ENCODE measurements at regions of chr2 and their contacts with region 1.

Region 1: GRCh38 chr2:183078465-183079138 is at the start of gene DUSP19:
- DNase-seq: peak; percentile 60 to 97
- H3K4me3 ChIP-seq: peak within 1 kb of the TSS; percentile 76 to 77
- H3K27ac ChIP-seq: peak within 1 kb of the TSS; percentile 89 to 91
- H3K4me1 ChIP-seq: peaks cover 0 to 18% of the 10 kb centered on the region in 2 donors
- H3K27me3 ChIP-seq: no peaks in the 10 kb centered on the region
- CTCF ChIP-seq: no peak
- total RNA-seq, gene DUSP19: 1.3 TPM

Region 2: DNA sequence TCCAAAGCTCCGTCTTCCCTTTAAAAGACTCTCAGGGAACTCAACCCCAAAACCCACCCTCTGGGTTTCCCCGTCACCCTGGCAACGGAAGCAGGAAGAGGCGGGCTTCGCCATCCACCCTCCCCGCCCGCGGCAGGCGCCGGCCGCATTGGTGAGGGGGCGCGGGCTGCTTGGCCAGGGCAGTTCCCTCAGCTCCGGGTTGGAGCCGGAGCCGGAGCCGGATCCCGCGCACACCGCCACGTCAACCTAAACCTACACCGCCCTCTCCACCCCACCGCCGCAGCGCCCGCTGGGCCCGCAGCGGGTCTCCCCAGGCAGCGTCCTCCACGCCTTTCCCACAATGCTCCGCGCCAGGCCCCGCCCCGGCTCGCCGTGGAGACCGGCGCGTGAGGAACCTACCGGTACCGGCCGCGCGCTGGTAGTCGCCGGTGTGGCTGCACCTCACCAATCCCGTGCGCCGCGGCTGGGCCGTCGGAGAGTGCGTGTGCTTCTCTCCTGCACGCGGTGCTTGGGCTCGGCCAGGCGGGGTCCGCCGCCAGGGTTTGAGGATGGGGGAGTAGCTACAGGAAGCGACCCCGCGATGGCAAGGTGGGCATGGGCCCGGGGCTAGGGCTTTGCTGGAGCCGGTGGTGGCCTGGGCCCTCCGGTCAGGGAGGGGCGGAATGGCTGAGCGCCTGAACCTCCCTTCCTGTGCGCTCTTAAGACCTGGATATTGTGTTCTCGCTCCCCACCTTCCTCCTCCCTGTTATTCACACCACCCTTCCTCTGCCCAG is 362.5 kb before region 1 on chr2 and contains the start of gene DNAJC10:
- intact Hi-C with region 1: loop called (anchors 5 kb)
- DNase-seq: peak; percentile 70 to 94
- H3K4me3 ChIP-seq: peak within 1 kb of the TSS; percentile 82 to 91
- H3K27ac ChIP-seq: peak within 1 kb of the TSS; percentile 86 to 90
- H3K4me1 ChIP-seq: peaks cover 0 to 4% of the 10 kb centered on the region in 2 donors
- H3K27me3 ChIP-seq: no peaks in the 10 kb centered on the region
- CTCF ChIP-seq: no peak
- total RNA-seq, gene DNAJC10: 26.0 TPM

Region 3: DNA sequence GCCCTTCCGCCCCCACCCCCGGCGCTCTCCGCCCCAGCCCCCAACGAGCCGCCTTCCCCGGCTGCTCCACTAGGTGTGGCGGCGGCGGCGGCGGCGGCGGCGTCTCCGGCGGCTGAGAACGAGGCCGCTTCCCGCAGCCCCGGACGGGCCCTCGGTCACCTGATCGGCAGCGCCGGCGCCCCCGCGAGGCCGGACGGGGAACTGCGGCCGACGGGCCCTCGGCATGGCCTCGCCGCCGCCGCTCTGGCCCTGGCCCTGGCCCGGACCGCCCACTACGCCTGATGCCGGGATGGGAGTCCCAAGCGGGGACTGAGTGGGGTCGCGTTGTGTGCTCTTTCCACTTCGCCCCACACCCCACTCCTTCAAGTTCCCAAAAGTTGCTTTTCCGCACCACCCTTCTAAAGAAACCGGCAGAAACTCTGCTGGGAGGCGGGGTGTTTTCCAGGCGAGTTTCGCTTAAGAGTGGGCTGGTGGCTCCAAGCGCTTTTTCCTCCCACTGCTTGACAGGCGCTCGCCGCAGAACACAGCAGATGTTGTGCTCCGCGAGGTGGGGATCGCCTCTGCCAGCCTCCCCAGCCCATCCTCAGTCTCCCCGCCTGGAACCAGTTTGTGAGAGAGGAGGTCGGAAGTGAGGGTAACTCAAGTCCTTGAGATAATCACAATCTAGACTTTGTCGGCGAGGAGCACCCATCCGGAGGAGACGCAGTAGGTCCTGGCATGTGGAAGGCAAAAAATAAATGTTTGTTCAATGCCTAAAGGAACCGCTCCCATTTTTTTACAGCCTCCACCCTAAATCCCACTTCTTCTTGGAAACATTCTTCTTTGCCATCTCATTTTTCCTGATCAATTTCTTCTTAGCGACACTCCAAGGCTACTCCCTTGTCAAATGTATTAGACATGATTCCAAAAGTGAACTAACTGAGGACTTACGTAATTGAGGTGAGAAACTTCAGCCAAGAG is 40.0 kb before region 1 on chr2 and contains the start of gene NCKAP1:
- intact Hi-C with region 1: loop called (anchors 1 kb)
- DNase-seq: peak; percentile 54 to 95
- H3K4me3 ChIP-seq: peak within 1 kb of the TSS; percentile 87 to 95
- H3K27ac ChIP-seq: peak within 1 kb of the TSS; percentile 99 to 100
- H3K4me1 ChIP-seq: peaks cover 0 to 22% of the 10 kb centered on the region in 2 donors
- H3K27me3 ChIP-seq: no peaks in the 10 kb centered on the region
- CTCF ChIP-seq: peak; percentile 45 to 97 (median 75)
- total RNA-seq, gene NCKAP1: 55.7 TPM

Region 4: DNA sequence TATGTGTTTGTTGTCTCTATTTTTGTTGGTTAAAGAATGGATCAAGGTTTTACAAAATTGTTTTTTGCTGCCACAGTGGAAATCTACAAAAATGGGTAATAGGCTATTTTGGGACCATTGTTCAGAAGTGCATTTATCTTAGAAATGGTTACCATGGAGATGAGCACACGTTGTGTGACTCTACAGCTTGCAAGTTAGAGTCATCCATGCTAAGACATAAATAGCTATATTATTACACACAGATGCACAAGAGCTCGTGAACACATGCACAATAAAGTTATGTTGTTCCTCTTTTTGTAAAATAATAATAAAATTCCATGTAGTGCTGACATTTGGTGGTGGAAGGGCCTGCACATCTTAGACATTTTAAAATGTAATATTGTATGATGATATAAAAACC is 15.5 kb before region 1 on chr2:
- intact Hi-C with region 1: loop called (anchors 2 kb)
- DNase-seq: no peak
- H3K4me3 ChIP-seq: no peak overlapping the region
- H3K27ac ChIP-seq: no peak overlapping the region
- H3K4me1 ChIP-seq: no peaks in the 10 kb centered on the region
- H3K27me3 ChIP-seq: no peaks in the 10 kb centered on the region
- CTCF ChIP-seq: no peak

Region 5: DNA sequence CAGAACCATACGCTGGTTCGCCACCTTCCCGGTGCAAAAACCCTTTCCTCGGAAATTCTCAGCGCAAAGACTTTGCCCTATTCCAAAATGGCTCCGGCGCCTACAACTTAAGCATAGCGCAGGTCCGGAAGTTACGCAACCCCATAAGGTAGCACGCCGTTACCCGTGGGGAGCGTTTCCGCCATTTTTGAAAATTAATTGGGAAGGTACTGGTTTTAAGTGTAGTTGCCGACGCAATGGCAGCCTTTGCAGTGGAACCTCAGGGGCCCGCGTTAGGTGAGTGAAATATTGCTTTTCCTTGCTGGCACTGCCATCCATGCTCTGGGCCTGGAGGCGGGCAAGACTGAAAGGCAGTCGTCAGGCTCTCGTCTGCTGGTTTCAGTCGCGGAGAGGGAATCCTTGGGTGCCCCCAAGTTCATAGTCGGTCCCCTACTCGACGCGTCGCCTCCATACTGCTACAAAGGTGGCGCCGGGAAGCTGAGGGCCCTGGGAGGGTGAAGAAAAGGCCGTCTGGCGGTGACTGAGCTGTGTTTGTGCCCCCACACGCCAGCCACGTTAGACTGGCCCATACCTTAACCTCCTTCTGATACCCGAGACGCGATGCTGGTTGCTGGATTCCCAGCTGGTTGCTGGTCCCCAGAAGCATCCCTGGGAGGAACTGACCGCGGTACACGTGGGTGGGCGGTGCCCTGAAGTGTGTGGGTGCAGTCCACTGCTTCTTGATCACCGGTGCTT is 45.8 kb after region 1 on chr2 and contains the start of gene NUP35:
- intact Hi-C with region 1: loop called (anchors 1 kb)
- DNase-seq: peak; percentile 43 to 93
- H3K4me3 ChIP-seq: peak within 1 kb of the TSS; percentile 81 to 94
- H3K27ac ChIP-seq: peak within 1 kb of the TSS; percentile 87
- H3K4me1 ChIP-seq: peaks cover 0 to 7% of the 10 kb centered on the region in 2 donors
- H3K27me3 ChIP-seq: no peaks in the 10 kb centered on the region
- CTCF ChIP-seq: no peak
- total RNA-seq, gene NUP35: not detected

Measured in ascending aorta (tissue), 2 donors.